ENCODE measurements at regions of chr12 and their contacts with region 1.

Region 1: GRCh38 chr12:9039397-9039977 is 50.1 kb downstream of the KLRG1 start:
- DNase-seq: peak; percentile 11
- H3K4me3 ChIP-seq: no peak overlapping the region
- CTCF ChIP-seq: peak; percentile 65

Region 2: GRCh38 chr12:8960176-8960575 is 79.3 kb before region 1 on chr12:
- in situ Hi-C with region 1: loop called (anchors 5 kb)
- DNase-seq: no peak
- H3K4me3 ChIP-seq: no peak overlapping the region
- CTCF ChIP-seq: no peak